Activated CD4-positive, alpha-beta T cell treated with anti-CD3 and anti-CD28 coated beads for 36 hours (primary cell): ENCODE measurements at regions of chr19 and their contacts with region 1.

Region 1: DNA sequence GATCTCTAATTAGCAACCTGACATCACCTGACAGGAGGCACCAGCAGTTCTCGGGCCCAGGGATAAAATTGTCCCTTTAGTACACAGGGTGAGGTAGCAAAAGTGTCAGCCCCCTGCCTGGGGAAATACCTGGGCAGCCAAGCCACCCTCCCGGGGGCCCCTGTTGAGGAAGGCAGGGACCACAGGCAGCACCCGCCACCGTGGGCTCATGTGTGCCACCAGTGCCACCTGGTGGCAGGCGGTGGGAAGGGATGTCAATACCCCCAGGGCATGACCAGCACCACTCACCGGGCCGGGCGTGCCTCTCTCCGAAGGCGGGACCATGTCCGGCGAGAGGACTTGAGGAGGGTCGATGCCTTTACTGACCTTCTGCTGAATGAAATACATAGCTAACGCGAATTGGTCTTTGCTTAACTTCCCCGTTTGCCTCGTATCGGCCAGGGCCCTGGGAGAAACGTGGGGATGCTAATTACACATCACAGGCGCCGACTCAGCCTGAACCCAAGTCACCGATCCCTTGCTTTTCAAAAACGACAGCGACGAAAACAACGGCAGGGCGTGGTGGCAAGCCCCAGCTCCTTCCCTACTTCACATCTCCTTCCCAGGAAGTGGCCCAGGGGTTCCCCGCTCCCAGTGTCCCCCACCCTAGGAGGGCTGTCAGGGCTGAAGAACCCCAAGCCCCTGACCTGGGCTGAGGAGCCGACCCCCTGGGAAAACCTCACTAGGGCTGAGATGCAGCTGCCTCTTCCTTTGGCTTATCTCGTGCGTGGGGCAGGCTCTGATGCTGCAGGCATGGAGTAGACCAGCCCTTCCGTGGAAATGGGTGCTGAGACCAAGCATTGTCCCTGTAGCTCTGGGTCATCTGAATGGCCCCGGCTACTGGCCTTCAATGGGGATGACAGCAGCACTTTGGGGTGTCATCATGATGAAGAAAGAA is 53.8 kb downstream of the EPS15L1 start:
- DNase-seq: peak; percentile 79
- ATAC-seq: peak; percentile 97
- H3K4me3 Mint-ChIP-seq: no peak overlapping the region
- H3K27ac Mint-ChIP-seq: no peak overlapping the region
- H3K4me1 Mint-ChIP-seq: peaks cover 4% of the 10 kb centered on the region
- H3K27me3 Mint-ChIP-seq: no peaks in the 10 kb centered on the region

Region 2: GRCh38 chr19:16403151-16403977 is 14.6 kb before region 1 on chr19:
- CTCF ChIA-PET with region 1: interaction called, 12 read pairs
- POLR2A ChIA-PET with region 1: no interaction called
- intact Hi-C with region 1: no loop called
- DNase-seq: no peak
- ATAC-seq: no peak
- H3K4me3 Mint-ChIP-seq: no peak overlapping the region
- H3K27ac Mint-ChIP-seq: no peak overlapping the region
- H3K4me1 Mint-ChIP-seq: peaks cover 12% of the 10 kb centered on the region
- H3K27me3 Mint-ChIP-seq: no peaks in the 10 kb centered on the region